Right ventricle myocardium superior (tissue), 1 donor: ENCODE measurements at regions of chr15 and their contacts with region 1.

Region 1: DNA sequence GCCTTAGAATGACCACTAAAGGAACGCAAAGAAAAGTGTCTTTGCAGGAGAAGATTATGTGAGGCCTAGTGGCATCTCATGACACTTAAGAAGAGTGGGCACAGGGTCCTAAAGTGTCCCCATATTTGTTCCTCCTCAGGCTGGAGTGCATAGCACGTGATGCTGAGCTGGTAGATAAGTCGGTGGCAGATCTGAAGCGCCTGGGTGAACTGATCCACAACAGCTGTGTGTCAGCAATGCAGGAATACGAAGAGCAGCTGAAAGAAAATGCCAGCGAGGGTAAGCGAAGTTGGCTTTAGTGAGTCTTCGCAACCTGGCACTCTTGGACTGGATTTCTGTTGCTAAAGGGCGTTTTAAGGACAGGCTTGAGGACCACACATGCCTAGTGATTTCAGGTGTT is 92.6 kb downstream of the CHD2 start:
- DNase-seq: no peak
- ATAC-seq: peak; percentile 77

Region 2: GRCh38 chr15:92797168-92797951 is 195.4 kb before region 1 on chr15:
- intact Hi-C with region 1: loop called (anchors 10 kb)
- DNase-seq: no peak
- ATAC-seq: peak; percentile 81